ENCODE measurements at regions of chr3 and their contacts with region 1.

Region 1: GRCh38 chr3:11643605-11644087 is at the start of gene VGLL4:
- DNase-seq: peak; percentile 89 to 94
- ATAC-seq: peak; percentile 77 to 80 (median 80)
- H3K4me3 ChIP-seq: peak within 1 kb of the TSS; percentile 76
- H3K27ac ChIP-seq: peak within 1 kb of the TSS; percentile 98
- H3K4me1 ChIP-seq: peaks cover 27% of the 10 kb centered on the region
- H3K27me3 ChIP-seq: no peaks in the 10 kb centered on the region
- CTCF ChIP-seq: peak; percentile 2
- total RNA-seq, gene VGLL4: 11.2 to 14.8 (median 12.7) TPM

Region 2: DNA sequence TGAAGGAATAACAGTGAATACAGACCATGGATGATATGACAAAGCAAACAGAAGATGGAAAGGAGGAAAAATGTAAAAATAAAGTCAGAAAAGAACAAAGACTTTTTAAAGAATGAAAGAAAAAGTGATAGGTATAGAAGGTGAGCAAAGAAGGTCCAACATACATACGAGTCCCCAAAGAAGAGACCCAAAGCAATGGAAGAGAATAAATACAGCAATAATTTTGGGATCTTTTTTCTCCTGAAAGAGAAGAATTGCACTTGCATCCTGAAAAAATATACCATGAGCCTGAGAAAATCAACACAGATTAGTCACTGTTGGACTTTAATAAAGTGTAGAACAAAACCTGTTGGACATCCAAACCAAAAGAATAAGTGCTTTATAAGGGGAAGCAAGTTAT is 736.4 kb before region 1 on chr3:
- intact Hi-C with region 1: no loop called
- DNase-seq: no peak
- ATAC-seq: no peak
- H3K4me3 ChIP-seq: no peak overlapping the region
- H3K27ac ChIP-seq: no peak overlapping the region
- H3K4me1 ChIP-seq: no peaks in the 10 kb centered on the region
- H3K27me3 ChIP-seq: peaks cover 0 to 4% (median 0%) of the 10 kb centered on the region in 3 donors
- CTCF ChIP-seq: no peak

Region 3: GRCh38 chr3:11465744-11466616 is 177.7 kb before region 1 on chr3:
- intact Hi-C with region 1: loop called (anchors 5 kb)
- DNase-seq: no peak
- ATAC-seq: peak; percentile 46 to 69 (median 66)
- H3K4me3 ChIP-seq: peak overlapping the region; percentile 6
- H3K27ac ChIP-seq: peak overlapping the region; percentile 94
- H3K4me1 ChIP-seq: peaks cover 40% of the 10 kb centered on the region
- H3K27me3 ChIP-seq: no peaks in the 10 kb centered on the region
- CTCF ChIP-seq: no peak

Region 4: GRCh38 chr3:11517601-11518000 is 126.0 kb before region 1 on chr3:
- intact Hi-C with region 1: loop called in 1 of 2 experiments (anchors 5 kb)
- DNase-seq: no peak
- ATAC-seq: peak in 1 of 4 donors; percentile 26
- H3K4me3 ChIP-seq: no peak overlapping the region
- H3K27ac ChIP-seq: peak overlapping the region; percentile 70
- H3K4me1 ChIP-seq: peaks cover 41% of the 10 kb centered on the region
- H3K27me3 ChIP-seq: no peaks in the 10 kb centered on the region
- CTCF ChIP-seq: no peak

Region 5: DNA sequence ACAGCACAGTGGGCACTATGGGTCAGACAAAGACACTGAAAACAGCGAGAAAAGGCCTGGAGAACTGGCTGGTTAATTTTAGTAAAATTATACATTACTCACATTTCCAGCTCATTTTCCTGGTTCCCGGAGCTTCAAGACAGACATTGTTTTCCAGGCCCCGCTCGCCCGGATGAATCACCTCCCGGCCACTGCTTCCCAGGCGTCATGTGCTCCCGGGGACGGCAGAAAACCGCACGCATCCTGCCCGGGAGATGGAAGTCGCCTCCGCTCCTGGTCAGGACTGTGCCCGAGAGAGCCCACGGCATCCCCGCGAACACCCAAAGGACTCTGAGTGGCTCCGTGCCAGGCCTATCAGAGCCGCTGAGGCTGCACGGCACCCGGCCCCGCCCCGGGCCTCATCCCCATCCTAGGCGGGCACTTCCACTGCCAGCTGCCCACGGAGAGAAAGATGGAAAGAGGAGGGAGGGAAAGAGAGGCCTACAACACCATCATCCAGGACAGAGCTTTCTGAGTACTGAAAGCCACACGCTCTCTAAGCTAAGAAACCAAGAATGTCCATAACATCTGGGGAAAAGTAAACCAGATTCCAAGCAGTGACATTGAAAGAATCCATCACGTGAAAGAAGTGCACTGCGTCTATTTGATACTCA is 75.0 kb before region 1 on chr3:
- intact Hi-C with region 1: loop called (anchors 2 to 5 kb)
- DNase-seq: peak; percentile 84 to 85
- ATAC-seq: peak; percentile 41 to 74 (median 64)
- H3K4me3 ChIP-seq: peak overlapping the region; percentile 53
- H3K27ac ChIP-seq: peak overlapping the region; percentile 93
- H3K4me1 ChIP-seq: peaks cover 47% of the 10 kb centered on the region
- H3K27me3 ChIP-seq: no peaks in the 10 kb centered on the region
- CTCF ChIP-seq: no peak

Region 6: GRCh38 chr3:11601446-11602238 is 42.0 kb before region 1 on chr3:
- intact Hi-C with region 1: loop called (anchors 5 kb)
- DNase-seq: peak; percentile 48 to 69
- ATAC-seq: no peak
- H3K4me3 ChIP-seq: no peak overlapping the region
- H3K27ac ChIP-seq: peak overlapping the region; percentile 81
- H3K4me1 ChIP-seq: peaks cover 57% of the 10 kb centered on the region
- H3K27me3 ChIP-seq: no peaks in the 10 kb centered on the region
- CTCF ChIP-seq: no peak

Measured in psoas muscle (tissue), 8 donors.